Ovary (tissue), 10 donors: ENCODE measurements at regions of chr17 and their contacts with region 1.

Region 1: DNA sequence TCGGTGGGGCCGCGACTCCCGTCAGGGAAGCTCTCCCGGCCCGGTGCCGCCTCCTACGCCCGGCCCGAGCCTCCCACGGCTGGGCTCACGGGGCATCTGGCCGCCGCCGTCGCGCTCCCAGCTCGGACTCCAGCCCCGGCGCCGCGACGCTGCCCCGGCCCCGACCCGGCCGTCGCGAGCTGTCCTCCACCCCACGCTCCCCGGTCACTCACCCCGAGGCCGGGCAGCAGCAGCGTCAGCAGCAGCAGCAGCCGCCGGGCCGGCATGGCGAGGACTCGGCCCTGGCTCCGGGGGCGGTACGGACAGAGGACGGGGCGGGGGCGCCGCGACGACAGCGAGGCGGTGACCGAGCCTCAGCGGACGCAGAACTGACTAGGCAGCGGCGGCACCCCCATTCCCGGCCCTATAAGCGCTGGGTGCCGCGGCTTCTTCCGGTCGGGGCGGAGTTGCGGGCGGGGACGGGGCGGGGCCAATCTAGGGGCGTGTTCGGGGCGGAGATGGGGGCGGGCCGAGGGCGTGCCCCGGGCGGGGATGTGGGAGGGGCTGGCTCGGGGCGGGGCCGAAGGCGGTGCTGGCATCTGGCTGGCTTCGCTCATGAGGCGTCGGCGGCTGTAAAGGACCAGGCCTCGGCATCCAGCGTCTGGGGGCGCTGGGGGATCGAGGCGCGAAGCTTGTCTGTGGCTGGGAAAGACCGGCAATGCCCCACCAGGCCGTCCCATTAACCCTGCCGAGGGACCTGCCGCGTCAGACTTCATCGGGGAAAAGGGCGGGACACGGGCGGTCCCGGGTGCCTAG is at the start of gene ERN1:
- DNase-seq: peak; percentile 92 to 96 (median 95)
- H3K4me3 ChIP-seq: peak within 1 kb of the TSS; percentile 52
- H3K27ac ChIP-seq: peak within 1 kb of the TSS; percentile 88 to 91
- H3K4me1 ChIP-seq: peaks cover 9% of the 10 kb centered on the region
- H3K27me3 ChIP-seq: no peaks in the 10 kb centered on the region
- CTCF ChIP-seq: no peak
- EP300 ChIP-seq: no peak
- POLR2A ChIP-seq: peak; percentile 74
- total RNA-seq, gene ERN1: 19.6 to 73.4 (median 34.8) TPM

Region 2: GRCh38 chr17:63911657-63912426 is 218.1 kb before region 1 on chr17:
- intact Hi-C with region 1: loop called in 3 of 4 experiments (anchors 5 to 10 kb)
- DNase-seq: peak; percentile 31 to 61 (median 53)
- H3K4me3 ChIP-seq: no peak overlapping the region
- H3K27ac ChIP-seq: no peak overlapping the region
- H3K4me1 ChIP-seq: no peaks in the 10 kb centered on the region
- H3K27me3 ChIP-seq: no peaks in the 10 kb centered on the region
- CTCF ChIP-seq: peak; percentile 39 to 47 (median 45)
- EP300 ChIP-seq: no peak
- POLR2A ChIP-seq: no peak

Region 3: GRCh38 chr17:63919311-63919723 is 210.6 kb before region 1 on chr17:
- intact Hi-C with region 1: loop called in 3 of 4 experiments (anchors 5 to 10 kb)
- DNase-seq: peak; percentile 51 to 65 (median 63)
- H3K4me3 ChIP-seq: no peak overlapping the region
- H3K27ac ChIP-seq: no peak overlapping the region
- H3K4me1 ChIP-seq: peaks cover 2% of the 10 kb centered on the region
- H3K27me3 ChIP-seq: no peaks in the 10 kb centered on the region
- CTCF ChIP-seq: peak; percentile 67 to 87 (median 81)
- EP300 ChIP-seq: no peak
- POLR2A ChIP-seq: no peak

Region 4: DNA sequence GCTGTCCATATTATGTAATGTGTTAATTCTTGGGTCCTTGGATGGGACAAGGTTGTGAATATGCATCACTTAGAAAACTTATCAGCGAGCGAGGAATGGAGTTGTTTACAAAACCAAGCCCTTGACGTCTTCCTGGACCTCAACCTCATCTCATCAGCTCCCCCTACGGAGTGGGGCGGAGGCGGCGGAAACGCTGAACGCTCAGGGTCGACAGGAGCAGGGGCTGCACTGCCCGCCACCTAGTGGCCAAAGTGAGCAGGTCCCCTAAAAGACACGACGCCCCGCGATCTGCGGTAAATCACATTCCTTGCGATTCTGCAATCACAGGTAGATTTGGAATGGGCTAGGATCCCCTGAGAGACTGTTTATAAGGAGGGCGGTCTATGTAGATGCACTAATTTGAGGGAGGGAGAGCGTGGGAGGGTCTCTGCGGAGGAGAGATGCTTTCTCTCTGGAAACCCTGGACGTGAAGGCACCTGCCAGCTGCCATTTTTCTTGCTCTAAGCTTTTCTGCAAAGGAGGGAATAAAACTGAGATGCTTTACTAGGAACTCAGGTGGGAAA is 104.1 kb before region 1 on chr17:
- intact Hi-C with region 1: loop called in 3 of 4 experiments (anchors 5 kb)
- DNase-seq: peak; percentile 58 to 83 (median 72)
- H3K4me3 ChIP-seq: no peak overlapping the region
- H3K27ac ChIP-seq: no peak overlapping the region
- H3K4me1 ChIP-seq: peaks cover 7% of the 10 kb centered on the region
- H3K27me3 ChIP-seq: no peaks in the 10 kb centered on the region
- CTCF ChIP-seq: peak; percentile 64 to 73 (median 66)
- EP300 ChIP-seq: no peak
- POLR2A ChIP-seq: no peak

Region 5: GRCh38 chr17:64297467-64298098 is 167.6 kb after region 1 on chr17:
- intact Hi-C with region 1: no loop called
- DNase-seq: no peak
- H3K4me3 ChIP-seq: no peak overlapping the region
- H3K27ac ChIP-seq: no peak overlapping the region
- H3K4me1 ChIP-seq: no peaks in the 10 kb centered on the region
- H3K27me3 ChIP-seq: no peaks in the 10 kb centered on the region
- CTCF ChIP-seq: no peak
- EP300 ChIP-seq: no peak
- POLR2A ChIP-seq: no peak

Region 6: DNA sequence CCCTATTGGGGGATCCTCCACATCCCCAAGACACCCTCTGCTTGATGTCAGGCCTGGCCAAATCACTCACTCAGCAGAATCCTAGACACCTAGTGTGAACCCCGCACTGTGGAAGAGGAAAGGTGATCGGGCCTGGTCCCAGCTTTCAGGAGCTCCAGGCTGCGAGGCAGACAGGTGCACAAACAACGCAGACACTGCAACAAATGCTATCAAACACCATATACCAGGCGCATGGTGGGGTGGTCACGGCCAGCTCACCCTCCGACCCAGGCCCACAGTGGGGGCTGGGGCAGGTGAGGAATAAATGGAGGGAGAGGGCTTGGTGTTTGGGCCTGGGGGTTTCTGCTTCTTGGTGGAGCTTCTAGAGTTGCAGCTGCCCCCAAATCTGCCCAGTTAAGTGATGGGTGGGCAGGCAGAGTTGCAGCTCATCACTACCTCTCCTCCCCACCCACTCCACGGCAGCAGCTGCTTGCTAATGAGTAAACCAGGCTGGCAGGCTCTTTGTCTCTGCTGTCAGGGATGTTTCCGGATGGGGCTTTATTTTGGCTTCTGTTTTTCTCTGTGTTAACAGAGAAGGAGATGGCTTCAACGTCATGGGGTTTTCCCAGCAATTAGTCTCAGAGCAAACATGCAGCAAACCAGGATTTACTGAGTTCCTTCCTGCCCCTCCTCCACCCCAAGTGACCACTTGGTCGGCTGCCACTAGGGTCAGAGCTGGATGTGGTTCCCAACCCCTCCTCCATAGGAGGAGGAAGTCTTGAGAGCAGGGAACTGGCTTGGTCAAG is 214.1 kb after region 1 on chr17:
- intact Hi-C with region 1: no loop called
- DNase-seq: peak; percentile 59 to 75 (median 68)
- H3K4me3 ChIP-seq: no peak overlapping the region
- H3K27ac ChIP-seq: peak overlapping the region in 1 of 2 donors; percentile 42
- H3K4me1 ChIP-seq: peaks cover 8% of the 10 kb centered on the region
- H3K27me3 ChIP-seq: no peaks in the 10 kb centered on the region
- CTCF ChIP-seq: no peak
- EP300 ChIP-seq: no peak
- POLR2A ChIP-seq: no peak